BJ (cell line): ENCODE measurements at regions of chr17 and their contacts with region 1.

Region 1: DNA sequence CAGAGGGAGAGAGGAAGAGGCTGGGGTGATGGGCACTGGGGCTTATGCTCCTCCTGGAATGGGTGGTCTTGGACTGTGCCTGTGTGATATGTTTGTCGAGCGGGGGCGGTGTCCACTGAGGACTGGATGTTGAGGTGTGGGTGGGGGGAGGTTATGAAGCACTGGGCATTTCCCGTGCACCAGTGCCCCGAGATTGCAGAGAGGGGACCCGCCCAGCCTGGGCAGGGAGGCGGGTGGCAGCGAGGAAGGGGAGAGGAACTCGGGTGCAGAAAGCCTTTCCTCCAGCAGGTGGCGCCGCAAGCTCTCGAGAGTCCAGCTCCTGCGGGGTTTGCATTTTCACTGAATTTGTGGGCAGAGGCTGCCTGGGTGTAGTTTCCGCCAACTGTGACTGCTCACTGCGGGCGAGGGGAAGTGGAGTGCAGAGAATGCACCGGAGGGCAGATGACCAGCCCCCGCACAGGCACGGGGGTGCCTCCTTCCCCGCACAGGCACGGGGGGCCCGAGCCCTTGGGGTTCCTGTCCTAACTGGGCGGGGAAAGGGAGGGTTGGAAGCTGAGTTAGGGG is 190.6 kb downstream of the SEC14L1 start:
- DNase-seq: no peak
- H3K4me3 ChIP-seq: no peak overlapping the region
- H3K27me3 ChIP-seq: no peaks in the 10 kb centered on the region
- CTCF ChIP-seq: peak; percentile 88

Region 2: DNA sequence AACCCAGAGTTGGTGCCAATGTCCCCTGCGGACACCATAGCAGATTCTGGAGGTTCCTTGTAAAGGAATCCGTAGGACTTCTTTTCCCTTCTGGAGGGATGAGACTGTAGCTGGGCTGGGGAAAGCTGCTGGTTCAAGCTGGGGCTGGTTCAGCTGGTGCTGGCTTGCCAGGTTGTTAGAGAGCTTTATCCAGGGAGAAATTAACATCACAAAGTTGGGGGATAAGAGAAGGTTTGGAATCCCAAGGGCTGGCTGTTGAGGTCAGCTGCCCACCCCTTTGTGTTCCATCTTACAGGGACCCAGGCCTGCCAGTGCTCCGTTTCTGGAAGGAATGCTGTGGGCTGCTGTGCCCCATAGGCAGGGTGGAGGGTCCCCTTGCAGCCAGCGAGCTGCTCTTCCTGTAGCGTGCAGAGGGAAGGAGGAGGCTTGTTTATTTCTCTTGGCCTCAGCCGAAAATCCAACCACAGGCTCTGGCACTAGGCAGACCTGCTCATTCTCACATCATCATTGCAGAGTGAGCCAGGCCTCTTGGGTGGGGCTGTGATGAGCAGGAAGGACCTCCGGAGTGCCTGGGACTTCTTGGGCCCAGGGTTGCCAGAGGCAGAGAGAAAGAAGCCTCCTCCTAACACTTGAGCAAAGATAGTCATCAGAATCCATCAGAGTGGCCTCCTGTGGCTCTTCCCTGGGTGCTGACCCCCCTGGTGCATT is 60.4 kb after region 1 on chr17:
- CTCF ChIA-PET with region 1: interaction called, 12 read pairs
- POLR2A ChIA-PET with region 1: no interaction called
- DNase-seq: peak; percentile 95
- H3K4me3 ChIP-seq: no peak overlapping the region
- H3K27me3 ChIP-seq: no peaks in the 10 kb centered on the region
- CTCF ChIP-seq: no peak

Region 3: GRCh38 chr17:77494664-77495435 is 163.5 kb after region 1 on chr17:
- CTCF ChIA-PET with region 1: interaction called, 40 read pairs
- POLR2A ChIA-PET with region 1: no interaction called
- DNase-seq: no peak
- H3K4me3 ChIP-seq: no peak overlapping the region
- H3K27me3 ChIP-seq: no peaks in the 10 kb centered on the region
- CTCF ChIP-seq: peak; percentile 91